WTC11 (cell line): ENCODE measurements at regions of chr2 and their contacts with region 1.

Region 1: DNA sequence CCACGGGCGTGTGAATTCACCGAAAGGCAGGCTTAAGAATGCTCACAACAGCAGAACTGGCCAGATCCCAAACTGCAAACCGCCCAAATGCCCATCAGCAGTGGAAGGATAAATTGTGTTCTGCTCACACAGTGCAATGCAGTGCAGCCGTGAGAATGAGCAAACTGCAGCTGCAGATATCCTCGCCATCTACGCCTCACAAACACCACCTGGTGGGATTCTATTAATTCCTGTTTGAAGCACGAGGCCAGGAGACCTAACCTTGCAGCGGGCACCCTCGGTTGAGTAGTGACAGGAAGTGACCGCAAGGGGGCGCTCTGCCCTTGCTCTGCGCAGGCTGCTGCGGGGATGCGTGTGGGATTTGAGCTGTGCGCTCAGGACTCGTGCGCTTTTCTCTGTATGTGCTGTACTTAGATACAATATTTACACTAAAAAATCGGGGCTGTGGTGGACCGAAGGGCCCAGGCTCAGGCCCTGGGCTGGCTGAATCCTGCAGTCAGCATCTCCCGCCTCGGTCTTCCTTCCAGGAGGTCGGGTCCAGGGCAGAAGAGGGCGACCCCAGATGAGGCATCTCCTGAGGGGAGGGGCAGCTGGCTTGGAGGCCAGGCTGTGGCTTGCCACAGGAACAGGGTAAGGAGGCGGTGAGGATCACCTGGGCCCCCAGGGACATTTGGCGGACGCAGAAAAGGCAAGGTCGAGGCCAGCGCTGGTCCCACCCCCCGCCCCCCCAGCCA is 19.8 kb upstream of the PDIA6 start:
- DNase-seq: peak; percentile 89
- ATAC-seq: peak; percentile 68
- H3K4me3 Mint-ChIP-seq: peak overlapping the region; percentile 65
- H3K27ac Mint-ChIP-seq: no peak overlapping the region
- H3K4me1 Mint-ChIP-seq: peaks cover 14% of the 10 kb centered on the region
- H3K27me3 Mint-ChIP-seq: peaks cover 22% of the 10 kb centered on the region
- CTCF ChIP-seq: peak; percentile 99

Region 2: DNA sequence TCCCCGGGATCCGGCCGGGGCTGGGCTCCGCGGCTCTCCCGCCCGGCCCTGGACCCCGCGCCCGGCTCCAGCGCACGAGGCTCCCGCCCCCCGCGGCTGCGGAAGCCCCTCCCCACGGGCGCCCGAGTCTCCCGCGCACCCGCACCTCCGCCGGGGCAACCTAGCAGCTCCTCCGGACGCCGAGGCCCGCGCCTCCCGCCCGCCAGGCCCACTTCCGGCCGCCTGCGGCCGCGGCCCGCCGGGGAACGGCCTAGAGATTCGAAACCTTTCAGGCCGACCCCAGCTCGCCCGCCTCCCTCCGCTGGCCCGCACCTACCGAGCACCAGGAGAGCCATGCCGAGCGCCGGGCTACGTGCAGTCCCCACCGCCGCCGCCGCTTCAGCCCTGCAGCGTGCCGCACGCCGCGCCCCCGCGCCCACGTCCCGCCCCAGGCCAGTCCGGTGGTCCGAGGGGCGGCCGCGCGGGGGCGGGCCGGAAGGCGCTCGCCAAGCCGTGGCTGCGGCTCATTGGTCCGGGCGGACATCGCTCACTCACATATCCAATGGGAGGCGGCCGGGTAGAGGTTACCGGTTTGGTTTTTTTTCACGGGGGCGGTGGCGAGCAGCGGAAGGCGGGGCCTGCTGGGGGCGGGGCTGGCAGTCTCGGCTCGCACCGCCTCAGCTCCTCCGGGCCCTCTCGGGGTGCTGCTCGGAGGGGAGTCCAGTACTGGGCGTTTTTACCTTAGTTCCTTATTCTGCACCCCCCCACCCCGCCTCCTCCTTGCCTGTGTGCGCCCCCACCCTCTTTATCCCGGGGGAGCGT is 19.8 kb before region 1 on chr2 and contains the start of gene PDIA6:
- CTCF ChIA-PET with region 1: interaction called, 65 read pairs
- POLR2A ChIA-PET with region 1: no interaction called
- DNase-seq: peak; percentile 97
- ATAC-seq: peak; percentile 91
- H3K4me3 Mint-ChIP-seq: peak within 1 kb of the TSS; percentile 88
- H3K27ac Mint-ChIP-seq: peak within 1 kb of the TSS; percentile 89
- H3K4me1 Mint-ChIP-seq: peaks cover 40% of the 10 kb centered on the region
- H3K27me3 Mint-ChIP-seq: no peaks in the 10 kb centered on the region
- CTCF ChIP-seq: no peak
- total RNA-seq, gene PDIA6: 331 to 344 TPM (median 340 TPM) in 3 replicates

Region 3: DNA sequence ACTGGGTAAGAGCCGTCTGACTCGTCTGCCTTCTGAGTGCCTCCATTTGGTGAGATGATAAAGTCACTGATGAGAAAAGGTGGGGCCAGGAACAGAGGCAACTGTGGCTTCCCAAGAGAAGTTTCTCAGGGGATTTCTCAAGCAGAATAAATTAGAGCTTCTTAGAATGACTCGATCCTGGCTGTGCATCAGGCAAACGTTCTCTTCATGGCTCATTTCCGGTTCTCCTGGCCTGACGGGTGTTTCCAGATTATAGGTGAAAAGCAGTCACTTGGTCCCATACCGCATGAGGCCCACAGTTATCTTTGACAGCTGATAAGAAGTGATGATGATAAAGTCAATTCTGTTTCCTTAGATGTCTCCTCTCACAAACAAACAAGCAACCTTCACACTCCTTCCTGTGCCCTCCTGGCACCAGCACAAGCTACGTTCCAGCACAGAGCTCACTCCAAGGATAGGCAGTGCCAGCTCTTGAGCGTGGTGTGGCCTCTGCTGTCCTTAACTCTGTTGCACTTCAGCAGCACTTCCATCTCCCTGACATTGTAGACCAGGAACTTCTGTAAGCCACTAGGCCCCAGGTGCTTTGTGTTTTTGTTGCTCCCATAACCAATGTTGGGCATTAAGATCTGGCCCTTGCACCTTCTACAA is 41.5 kb after region 1 on chr2:
- CTCF ChIA-PET with region 1: interaction called, 16 read pairs
- POLR2A ChIA-PET with region 1: interaction called, 3 read pairs
- DNase-seq: no peak
- ATAC-seq: no peak
- H3K4me3 Mint-ChIP-seq: no peak overlapping the region
- H3K27ac Mint-ChIP-seq: no peak overlapping the region
- H3K4me1 Mint-ChIP-seq: peaks cover 12% of the 10 kb centered on the region
- H3K27me3 Mint-ChIP-seq: no peaks in the 10 kb centered on the region
- CTCF ChIP-seq: no peak

Region 4: DNA sequence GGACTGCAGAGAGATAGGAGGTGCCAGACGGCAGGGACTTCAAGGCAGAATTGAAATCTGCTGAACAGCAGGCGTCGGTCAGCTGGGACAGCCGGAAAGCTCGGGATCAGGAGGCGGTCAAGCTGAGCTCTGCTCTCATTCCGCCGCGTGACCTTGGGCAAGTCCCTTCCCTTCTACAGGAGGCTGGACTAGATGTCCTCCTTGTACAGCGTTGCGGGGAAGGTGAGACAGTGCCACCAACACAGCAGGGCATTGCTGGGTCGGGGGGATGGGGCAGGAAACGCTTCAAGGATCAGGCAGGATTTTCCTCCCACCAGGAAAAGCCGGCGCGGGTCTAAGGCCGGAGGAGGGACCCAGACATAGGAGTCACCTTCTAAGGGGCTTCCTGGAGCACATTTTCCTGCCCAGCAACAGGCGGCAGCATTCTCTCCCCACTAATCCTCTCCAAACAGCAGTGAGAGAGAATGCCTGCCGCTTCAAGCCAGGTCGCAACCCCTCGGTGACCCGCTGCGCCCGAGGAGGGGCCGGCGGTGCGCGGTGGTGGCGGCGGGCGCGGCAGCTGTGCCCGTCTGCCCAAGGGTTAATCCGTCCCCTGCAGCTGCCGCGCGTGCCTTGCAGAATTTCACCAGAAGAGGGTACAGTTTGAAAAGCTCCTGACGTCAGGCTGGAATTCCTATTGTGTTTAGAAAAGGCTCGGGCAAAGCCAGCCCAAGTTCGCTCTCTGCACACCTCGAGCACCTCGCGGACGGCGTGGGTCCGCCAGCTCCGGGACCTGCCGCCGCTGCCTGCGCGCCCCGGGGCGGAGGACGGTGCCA is 79.1 kb after region 1 on chr2 and contains the start of gene KCNF1:
- CTCF ChIA-PET with region 1: interaction called, 84 read pairs
- POLR2A ChIA-PET with region 1: no interaction called
- DNase-seq: peak; percentile 62
- ATAC-seq: peak; percentile 49
- H3K4me3 Mint-ChIP-seq: peak within 1 kb of the TSS; percentile 68
- H3K27ac Mint-ChIP-seq: no peak within 1 kb of the TSS
- H3K4me1 Mint-ChIP-seq: peaks cover 37% of the 10 kb centered on the region
- H3K27me3 Mint-ChIP-seq: peaks cover 37% of the 10 kb centered on the region
- CTCF ChIP-seq: no peak
- total RNA-seq, gene KCNF1: 1.2 to 1.4 TPM (median 1.2 TPM) in 3 replicates

Region 5: GRCh38 chr2:11022604-11023273 is 190.4 kb after region 1 on chr2:
- CTCF ChIA-PET with region 1: interaction called, 10 read pairs
- POLR2A ChIA-PET with region 1: no interaction called
- DNase-seq: no peak
- ATAC-seq: no peak
- H3K4me3 Mint-ChIP-seq: no peak overlapping the region
- H3K27ac Mint-ChIP-seq: no peak overlapping the region
- H3K4me1 Mint-ChIP-seq: peaks cover 25% of the 10 kb centered on the region
- H3K27me3 Mint-ChIP-seq: no peaks in the 10 kb centered on the region
- CTCF ChIP-seq: no peak

Region 6: DNA sequence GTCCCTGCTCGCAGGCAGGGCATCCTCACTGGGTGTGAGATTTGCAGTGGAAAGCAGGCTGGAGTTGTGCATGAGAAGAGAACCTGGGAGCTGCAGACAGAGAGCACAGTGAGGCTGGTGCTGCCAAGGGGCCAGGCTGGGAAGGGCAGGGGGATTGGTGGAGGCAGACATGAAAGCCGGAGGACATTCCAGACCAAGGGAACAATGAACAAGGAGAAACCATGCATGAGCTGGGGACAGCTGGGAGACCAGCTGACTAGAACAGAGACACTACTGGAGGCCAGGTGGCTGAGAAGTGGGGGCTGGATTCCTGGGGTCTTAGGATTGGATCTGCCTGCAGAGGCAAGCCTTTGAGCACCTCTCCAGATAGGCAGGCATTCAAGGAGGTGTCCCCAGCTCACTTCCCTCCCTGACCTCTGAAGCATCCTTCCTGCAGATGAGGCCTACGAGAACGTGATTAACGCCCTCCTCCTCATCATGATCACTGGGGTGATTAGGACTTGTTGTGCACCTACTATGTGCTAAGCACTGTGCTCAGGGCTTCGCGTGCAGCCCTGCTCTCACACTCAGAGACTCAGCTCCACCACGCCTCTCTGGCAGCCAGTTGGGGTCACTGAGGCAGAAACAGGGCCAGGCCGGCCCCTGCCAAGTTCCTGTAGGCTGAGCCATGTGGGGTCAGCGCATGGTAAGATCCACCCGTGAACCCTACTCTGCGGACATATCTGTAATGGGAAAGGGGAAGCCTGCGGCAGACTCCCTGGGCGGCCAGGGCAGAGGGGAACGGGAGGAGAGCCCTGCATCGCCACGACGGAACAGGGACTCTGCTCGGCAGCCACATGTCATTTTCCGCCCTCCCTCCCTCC is 248.1 kb after region 1 on chr2:
- CTCF ChIA-PET with region 1: interaction called, 23 read pairs
- POLR2A ChIA-PET with region 1: no interaction called
- DNase-seq: no peak
- ATAC-seq: peak; percentile 63
- H3K4me3 Mint-ChIP-seq: no peak overlapping the region
- H3K27ac Mint-ChIP-seq: no peak overlapping the region
- H3K4me1 Mint-ChIP-seq: no peaks in the 10 kb centered on the region; the same call in 1 of the 2 replicates
- H3K27me3 Mint-ChIP-seq: no peaks in the 10 kb centered on the region
- CTCF ChIP-seq: no peak

Region 7: DNA sequence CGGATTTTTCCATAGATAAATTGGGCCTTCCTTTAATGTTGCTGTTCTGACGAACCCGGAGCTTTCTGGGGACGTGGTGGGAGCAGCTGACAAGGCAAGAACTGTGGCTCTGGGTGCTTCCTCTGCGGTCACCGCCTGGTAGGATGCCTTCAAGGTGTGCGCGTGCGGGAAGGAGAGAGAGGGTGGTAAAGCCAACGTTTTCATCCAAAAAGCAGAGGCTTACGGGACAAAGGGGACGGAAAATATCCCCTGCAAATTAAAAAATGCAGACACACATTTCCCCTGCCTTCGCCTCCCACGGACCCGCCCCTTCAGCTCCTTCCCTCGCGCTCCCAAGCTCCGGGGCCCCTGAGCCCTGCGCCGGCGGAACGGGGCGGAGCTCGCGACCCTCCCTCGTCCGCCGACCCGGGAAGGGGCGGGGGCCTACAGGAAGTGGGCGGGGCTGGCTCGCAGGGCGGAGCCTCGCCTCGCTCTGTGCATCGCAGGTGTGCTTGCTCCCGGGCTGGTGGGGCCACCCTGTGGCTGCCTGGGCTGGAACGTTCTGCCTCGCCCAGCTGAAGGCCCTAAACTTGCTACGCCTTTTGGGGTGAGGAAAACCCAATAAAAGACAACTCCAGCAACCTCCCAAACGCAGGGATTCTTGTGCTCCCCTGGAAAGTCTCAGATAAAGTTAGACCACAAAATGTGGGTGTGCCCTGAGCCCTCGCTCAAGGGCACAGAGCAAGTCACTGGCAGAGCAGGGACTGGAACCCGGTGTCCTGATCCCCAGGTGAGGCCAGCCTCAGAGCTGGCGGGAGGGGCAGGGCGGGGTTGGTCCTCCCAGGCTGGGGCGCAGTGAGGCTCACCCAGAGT is 297.5 kb after region 1 on chr2:
- CTCF ChIA-PET with region 1: interaction called, 231 read pairs
- POLR2A ChIA-PET with region 1: no interaction called
- DNase-seq: peak; percentile 95
- ATAC-seq: peak; percentile 91
- H3K4me3 Mint-ChIP-seq: peak overlapping the region; percentile 61
- H3K27ac Mint-ChIP-seq: no peak overlapping the region
- H3K4me1 Mint-ChIP-seq: peaks cover 12% of the 10 kb centered on the region
- H3K27me3 Mint-ChIP-seq: peaks cover 10% of the 10 kb centered on the region
- CTCF ChIP-seq: no peak